ENCODE measurements at regions of chr14 and their contacts with region 1.

Region 1: GRCh38 chr14:46681168-46681567 is 29.6 kb upstream of the RPL10L start:
- DNase-seq: no peak
- ATAC-seq: no peak
- H3K4me3 ChIP-seq: no peak overlapping the region
- H3K27ac ChIP-seq: no peak overlapping the region
- H3K4me1 ChIP-seq: no peaks in the 10 kb centered on the region
- H3K27me3 ChIP-seq: no peaks in the 10 kb centered on the region
- CTCF ChIP-seq: no peak
- POLR2A ChIP-seq: no peak
- RAD21 ChIP-seq: no peak

Region 2: GRCh38 chr14:46717211-46717610 is 36.0 kb after region 1 on chr14:
- CTCF ChIA-PET with region 1: no interaction called
- POLR2A ChIA-PET with region 1: no interaction called
- dilution Hi-C with region 1: no loop called
- in situ Hi-C with region 1: no loop called
- intact Hi-C with region 1: loop called (anchors 2 kb)
- DNase-seq: no peak
- ATAC-seq: no peak
- H3K4me3 ChIP-seq: no peak overlapping the region
- H3K27ac ChIP-seq: no peak overlapping the region
- H3K4me1 ChIP-seq: no peaks in the 10 kb centered on the region
- H3K27me3 ChIP-seq: no peaks in the 10 kb centered on the region
- CTCF ChIP-seq: no peak
- POLR2A ChIP-seq: no peak
- RAD21 ChIP-seq: no peak

Measured in IMR-90 (cell line).